ENCODE measurements at regions of chr6 and their contacts with region 1.

Region 1: DNA sequence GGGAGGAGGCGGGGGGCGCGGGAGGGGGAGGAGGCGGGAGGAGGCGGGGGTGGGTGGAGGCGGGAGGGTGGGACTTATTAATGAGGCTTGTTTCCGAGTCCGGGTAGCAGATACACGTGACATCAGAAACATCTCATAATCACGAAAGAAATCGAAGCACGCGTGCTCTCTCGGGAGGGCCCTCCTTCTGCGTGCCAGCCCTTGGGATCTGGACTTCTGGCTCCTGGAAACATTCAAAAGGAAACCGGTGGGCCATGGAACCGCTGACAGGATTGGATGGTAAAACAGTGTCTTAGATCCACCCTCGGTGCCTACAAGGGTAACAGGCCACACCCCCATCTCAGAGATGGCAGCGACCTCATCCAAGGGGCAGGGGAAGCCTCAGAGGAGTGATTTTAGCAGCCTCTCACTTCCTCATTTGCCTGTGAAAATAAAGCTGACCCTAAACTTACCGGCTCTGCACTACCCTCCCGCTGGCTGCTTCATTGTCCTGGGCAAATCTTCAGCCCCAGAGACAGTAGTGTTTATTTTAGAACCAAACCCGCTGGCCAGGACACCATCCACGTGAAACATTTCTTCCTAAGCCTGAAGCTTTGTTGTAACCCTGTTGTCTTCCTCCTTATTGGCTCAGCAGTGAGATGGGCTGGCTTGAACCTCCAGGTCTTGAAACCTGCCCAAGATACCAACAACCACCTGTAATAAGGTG is 97.5 kb downstream of the PSMG4 start:
- DNase-seq: peak in 8 of 10 donors; percentile 29 to 66 (median 62)
- H3K4me3 ChIP-seq: peak overlapping the region in 56 of 59 donors; percentile 3 to 61 (median 42)
- H3K27ac ChIP-seq: peak overlapping the region; percentile 72 to 99 (median 95)
- H3K27me3 ChIP-seq: no peaks in the 10 kb centered on the region
- CTCF ChIP-seq: no peak

Region 2: GRCh38 chr6:3258720-3259490 is 97.3 kb before region 1 on chr6 and contains the start of gene PSMG4:
- intact Hi-C with region 1: no loop called
- DNase-seq: peak; percentile 82 to 96 (median 90)
- H3K4me3 ChIP-seq: peak within 1 kb of the TSS; percentile 53 to 98 (median 89)
- H3K27ac ChIP-seq: peak within 1 kb of the TSS in 54 of 59 donors; percentile 2 to 92 (median 75)
- H3K27me3 ChIP-seq: no peaks in the 10 kb centered on the region
- CTCF ChIP-seq: peak in 25 of 56 donors; percentile 1 to 47 (median 25)
- total RNA-seq, gene PSMG4: 17.1 to 34.4 (median 25.3) TPM

Region 3: DNA sequence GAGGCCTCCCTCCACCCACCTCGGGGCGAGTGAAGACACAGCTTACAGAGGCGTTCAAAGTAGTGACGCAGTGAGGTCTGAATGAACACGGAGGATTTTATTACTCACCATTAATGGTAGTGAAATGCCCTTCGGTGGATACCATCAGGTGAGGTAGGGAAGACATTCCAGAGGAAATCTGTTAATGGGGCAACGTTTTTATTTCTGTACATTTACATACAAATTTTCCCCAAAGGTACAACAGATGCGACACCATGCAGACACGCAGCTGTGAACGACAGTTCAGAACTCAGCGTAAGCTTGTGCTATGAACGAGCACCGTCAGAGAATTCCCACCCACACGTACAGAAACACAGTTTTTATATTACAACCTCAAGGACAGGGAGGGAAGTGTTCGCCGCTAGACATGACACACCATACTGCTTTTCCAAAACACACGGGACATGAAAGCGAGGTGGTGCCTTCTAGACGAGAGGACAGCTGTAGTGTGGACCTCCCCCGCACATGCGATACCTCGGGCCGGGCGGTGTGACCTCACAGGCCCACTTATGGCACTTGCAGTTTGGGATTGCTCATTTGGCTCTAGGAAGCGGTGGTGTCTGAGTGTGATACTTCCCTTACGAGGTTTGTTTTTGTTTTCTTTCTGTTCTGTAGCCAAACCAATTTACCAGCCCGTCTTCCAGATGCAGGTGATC is 86.8 kb before region 1 on chr6:
- intact Hi-C with region 1: no loop called
- DNase-seq: peak in 4 of 10 donors; percentile 63 to 75 (median 68)
- H3K4me3 ChIP-seq: no peak overlapping the region
- H3K27ac ChIP-seq: peak overlapping the region in 2 of 59 donors; percentile 14 to 29
- H3K27me3 ChIP-seq: no peaks in the 10 kb centered on the region
- CTCF ChIP-seq: no peak

Region 4: GRCh38 chr6:3372007-3372846 is 16.0 kb after region 1 on chr6:
- intact Hi-C with region 1: loop called in 1 of 2 experiments (anchors 2 kb)
- DNase-seq: no peak
- H3K4me3 ChIP-seq: no peak overlapping the region
- H3K27ac ChIP-seq: peak overlapping the region in 45 of 59 donors; percentile 3 to 97 (median 84)
- H3K27me3 ChIP-seq: no peaks in the 10 kb centered on the region
- CTCF ChIP-seq: peak in 19 of 56 donors; percentile 15 to 38 (median 25)

Region 5: DNA sequence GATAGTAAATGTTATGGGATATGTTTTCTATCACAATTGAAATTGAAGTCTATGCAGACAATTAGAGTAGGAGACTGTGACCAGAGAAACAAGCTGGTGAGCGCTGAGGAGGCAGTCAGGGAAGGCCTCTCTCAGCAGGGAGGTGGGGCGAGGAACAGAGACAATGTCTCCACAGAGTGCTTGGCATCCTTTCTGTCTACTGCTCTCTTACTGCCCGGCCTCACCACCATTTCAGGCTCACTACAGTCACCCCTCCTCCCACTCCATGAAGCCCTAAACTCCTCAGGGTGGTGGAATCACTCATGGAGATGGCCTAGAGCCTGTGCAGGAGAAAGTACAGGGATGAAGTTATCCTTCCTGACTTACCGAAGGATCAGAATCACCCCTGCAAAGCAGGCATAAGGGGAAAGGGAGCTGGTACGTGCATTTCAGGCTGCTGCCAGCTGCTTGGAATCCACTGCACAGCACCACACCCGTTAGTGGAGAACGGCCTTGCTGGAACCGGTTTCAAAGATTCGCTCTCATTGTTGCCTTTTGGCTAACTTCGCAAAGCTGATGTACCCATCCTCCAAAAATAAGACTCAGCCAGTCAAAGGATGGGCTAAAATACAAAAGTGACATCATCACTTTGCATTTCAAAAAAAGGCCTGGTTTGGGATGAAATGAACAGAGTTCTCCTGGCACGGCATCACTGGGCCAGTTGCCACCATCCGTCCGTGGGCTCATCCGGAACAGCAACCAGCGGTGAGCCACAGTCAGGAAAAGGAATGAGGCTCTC is 33.4 kb after region 1 on chr6:
- intact Hi-C with region 1: loop called in 1 of 2 experiments (anchors 2 kb)
- DNase-seq: peak in 3 of 10 donors; percentile 47 to 65 (median 48)
- H3K4me3 ChIP-seq: peak overlapping the region in 10 of 59 donors; percentile 2 to 39 (median 16)
- H3K27ac ChIP-seq: peak overlapping the region; percentile 40 to 99 (median 97)
- H3K27me3 ChIP-seq: no peaks in the 10 kb centered on the region
- CTCF ChIP-seq: peak in 1 of 56 donors; percentile 3

Region 6: GRCh38 chr6:4049246-4049645 is 693.0 kb after region 1 on chr6:
- intact Hi-C with region 1: no loop called
- DNase-seq: no peak
- H3K4me3 ChIP-seq: no peak overlapping the region
- H3K27ac ChIP-seq: no peak overlapping the region
- H3K27me3 ChIP-seq: no peaks in the 10 kb centered on the region
- CTCF ChIP-seq: no peak